Activated naive CD8-positive, alpha-beta T cell treated with anti-CD3 and anti-CD28 coated beads, Interleukin-2, amount 10 ng/mL, durations not matched to agents 7 days and 5 days (primary cell): ENCODE measurements at regions of chr11 and their contacts with region 1.

Region 1: GRCh38 chr11:118895142-118896039 is 11.7 kb downstream of the CXCR5 start:
- DNase-seq: peak; percentile 77
- ATAC-seq: peak; percentile 80
- H3K4me3 Mint-ChIP-seq: peak overlapping the region; percentile 69
- H3K27ac Mint-ChIP-seq: peak overlapping the region; percentile 88
- H3K4me1 Mint-ChIP-seq: peaks cover 52% of the 10 kb centered on the region
- H3K27me3 Mint-ChIP-seq: no peaks in the 10 kb centered on the region

Region 2: GRCh38 chr11:118827118-118827517 is 68.3 kb before region 1 on chr11:
- POLR2A ChIA-PET with region 1: no interaction called
- DNase-seq: no peak
- ATAC-seq: no peak
- H3K4me3 Mint-ChIP-seq: no peak overlapping the region
- H3K27ac Mint-ChIP-seq: no peak overlapping the region
- H3K4me1 Mint-ChIP-seq: no peaks in the 10 kb centered on the region
- H3K27me3 Mint-ChIP-seq: no peaks in the 10 kb centered on the region

Region 3: DNA sequence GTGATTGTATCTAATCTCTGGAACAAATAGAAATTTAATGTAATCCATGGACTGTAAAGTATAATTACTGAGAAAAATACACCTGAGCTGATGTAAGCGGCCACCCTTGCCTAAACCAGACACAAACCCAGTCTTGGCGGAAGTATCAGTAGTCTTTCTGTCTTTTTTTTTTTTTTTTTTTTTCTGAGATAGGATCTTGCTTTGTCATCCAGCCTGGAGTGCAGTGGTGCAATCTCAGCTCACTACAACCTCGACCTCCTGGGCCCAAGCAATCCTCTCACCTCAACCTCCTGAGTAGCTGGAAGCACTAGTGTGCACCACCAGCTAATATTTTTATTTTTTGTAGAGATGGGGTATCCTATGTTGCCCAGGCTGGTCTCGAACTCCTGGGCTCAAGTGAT is 17.2 kb before region 1 on chr11:
- POLR2A ChIA-PET with region 1: interaction called, 72 read pairs
- DNase-seq: no peak
- ATAC-seq: peak; percentile 37
- H3K4me3 Mint-ChIP-seq: peak overlapping the region; percentile 6
- H3K27ac Mint-ChIP-seq: peak overlapping the region; percentile 99
- H3K4me1 Mint-ChIP-seq: peaks cover 70% of the 10 kb centered on the region
- H3K27me3 Mint-ChIP-seq: no peaks in the 10 kb centered on the region

Region 4: GRCh38 chr11:118928108-118928870 is 32.9 kb after region 1 on chr11:
- POLR2A ChIA-PET with region 1: interaction called, 11 read pairs
- DNase-seq: peak; percentile 96
- ATAC-seq: peak; percentile 46
- H3K4me3 Mint-ChIP-seq: peak overlapping the region; percentile 99
- H3K27ac Mint-ChIP-seq: peak overlapping the region; percentile 93
- H3K4me1 Mint-ChIP-seq: peaks cover 50% of the 10 kb centered on the region
- H3K27me3 Mint-ChIP-seq: no peaks in the 10 kb centered on the region

Region 5: DNA sequence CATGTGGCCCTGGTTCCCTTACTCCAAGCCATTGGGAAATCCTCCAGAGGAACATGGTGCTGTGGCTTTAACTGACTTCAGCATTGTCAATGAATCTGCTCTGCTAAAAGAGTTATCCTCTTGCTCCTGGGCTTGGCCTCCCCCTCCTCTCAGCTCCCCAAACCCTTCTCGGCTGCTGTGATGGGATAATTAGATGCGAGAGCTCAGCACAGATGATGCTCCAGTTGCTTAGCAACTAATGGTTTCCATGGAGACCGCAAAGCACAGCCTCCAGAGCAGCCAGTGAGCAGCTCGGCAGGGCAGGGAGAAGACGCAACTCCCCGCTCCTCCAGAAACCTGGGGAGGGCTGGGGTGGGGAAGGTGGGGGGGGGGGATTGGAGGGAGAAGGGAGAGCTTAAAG is 57.9 kb after region 1 on chr11:
- POLR2A ChIA-PET with region 1: no interaction called
- DNase-seq: no peak
- ATAC-seq: no peak
- H3K4me3 Mint-ChIP-seq: no peak overlapping the region
- H3K27ac Mint-ChIP-seq: no peak overlapping the region
- H3K4me1 Mint-ChIP-seq: peaks cover 5% of the 10 kb centered on the region
- H3K27me3 Mint-ChIP-seq: peaks cover 4% of the 10 kb centered on the region